Mammary epithelial cell (primary cell): ENCODE measurements at regions of chr15 and their contacts with region 1.

Region 1: DNA sequence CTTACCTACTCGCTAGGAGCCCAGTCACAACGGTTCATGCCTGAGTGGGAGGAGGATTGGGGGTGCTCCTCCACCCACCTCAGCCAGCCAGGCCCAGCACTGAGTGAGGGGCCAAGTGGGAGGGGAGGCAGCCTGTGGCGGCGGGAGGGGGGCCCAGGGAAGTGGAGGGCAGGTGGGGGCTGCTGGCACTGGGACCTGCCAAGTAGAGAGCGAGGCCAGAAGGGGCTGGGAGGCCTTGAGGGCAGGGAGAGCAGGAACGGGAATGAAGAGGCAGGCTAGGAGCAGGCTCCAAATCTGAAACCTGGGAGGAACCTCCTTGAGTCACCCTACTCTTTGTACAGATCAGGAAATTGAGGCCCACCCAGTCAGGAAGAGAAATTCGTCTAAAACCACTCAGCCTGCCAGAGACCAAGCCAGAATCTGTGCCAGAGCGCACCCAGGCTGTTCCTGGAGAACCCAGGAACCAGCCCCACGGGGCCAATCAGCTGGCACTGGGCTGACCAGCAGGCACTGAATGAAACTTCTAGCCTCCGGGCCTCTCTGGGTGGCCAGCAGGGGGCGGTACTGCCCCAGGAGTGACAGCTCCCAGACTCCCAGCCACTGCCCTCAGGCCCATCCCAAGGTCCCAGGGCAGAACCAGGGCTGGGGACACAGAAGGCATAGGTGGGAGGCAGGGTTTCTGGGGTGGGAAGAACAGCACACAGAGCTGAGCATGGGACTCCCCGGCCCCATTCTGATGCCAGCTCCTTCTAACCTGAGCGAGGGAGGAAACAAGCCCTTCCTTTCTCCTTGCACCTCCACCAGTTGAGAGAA is 14.8 kb upstream of the CYP11A1 start:
- DNase-seq: peak; percentile 86
- H3K4me3 ChIP-seq: no peak overlapping the region
- H3K27ac ChIP-seq: peak overlapping the region; percentile 95
- H3K4me1 ChIP-seq: peaks cover 68% of the 10 kb centered on the region
- H3K27me3 ChIP-seq: no peaks in the 10 kb centered on the region
- CTCF ChIP-seq: peak; percentile 83 to 98

Region 2: GRCh38 chr15:74307827-74308644 is 74.2 kb before region 1 on chr15:
- CTCF ChIA-PET with region 1: no interaction called
- dilution Hi-C with region 1: no loop called
- in situ Hi-C with region 1: no loop called
- intact Hi-C with region 1: no loop called
- DNase-seq: peak; percentile 58
- H3K4me3 ChIP-seq: no peak overlapping the region
- H3K27ac ChIP-seq: no peak overlapping the region
- H3K4me1 ChIP-seq: peaks cover 12% of the 10 kb centered on the region
- H3K27me3 ChIP-seq: no peaks in the 10 kb centered on the region
- CTCF ChIP-seq: peak; percentile 75 to 92

Region 3: DNA sequence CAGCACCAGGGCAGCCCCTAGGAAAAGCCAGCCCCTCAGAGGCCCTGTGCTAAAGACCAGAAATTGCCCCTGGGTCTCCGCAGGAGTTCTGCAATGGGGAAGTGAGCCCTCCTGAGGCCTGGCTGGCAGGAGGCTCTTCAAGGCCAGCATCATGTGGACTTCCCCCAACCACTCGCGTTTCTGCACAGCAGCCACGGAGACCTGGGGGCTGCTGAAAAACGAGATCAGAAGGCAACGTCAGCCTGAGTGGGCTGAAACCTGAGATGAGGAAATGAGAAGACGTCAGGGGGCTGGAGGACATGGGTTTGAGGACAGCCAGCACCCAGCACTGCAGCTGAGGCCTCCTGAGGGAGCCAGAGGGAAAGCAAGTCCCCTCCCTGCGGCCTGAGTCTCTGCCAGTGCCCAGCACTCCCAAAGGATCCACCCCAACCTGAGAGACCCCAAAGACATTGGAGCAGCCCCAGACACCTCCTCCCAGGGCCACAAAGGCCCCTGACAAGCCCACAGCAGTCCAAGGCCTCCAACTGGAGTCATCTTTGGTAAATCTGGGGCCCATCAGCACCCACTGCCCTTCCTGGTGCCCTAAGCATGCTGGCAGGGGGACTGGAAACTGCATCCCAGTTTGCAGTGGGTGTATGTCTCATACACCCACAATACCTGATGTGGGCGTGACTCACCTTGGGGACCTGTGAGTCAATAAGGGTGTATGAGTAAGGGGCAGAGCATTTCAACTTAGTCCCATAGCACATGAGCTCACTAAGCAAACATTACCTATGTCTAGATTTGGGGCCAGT is 14.4 kb after region 1 on chr15:
- CTCF ChIA-PET with region 1: interaction called, 3 read pairs
- dilution Hi-C with region 1: no loop called
- in situ Hi-C with region 1: no loop called
- intact Hi-C with region 1: loop called (anchors 1 kb)
- DNase-seq: peak; percentile 98
- H3K4me3 ChIP-seq: no peak overlapping the region
- H3K27ac ChIP-seq: peak overlapping the region; percentile 82
- H3K4me1 ChIP-seq: peaks cover 63% of the 10 kb centered on the region
- H3K27me3 ChIP-seq: no peaks in the 10 kb centered on the region
- CTCF ChIP-seq: no peak

Region 4: DNA sequence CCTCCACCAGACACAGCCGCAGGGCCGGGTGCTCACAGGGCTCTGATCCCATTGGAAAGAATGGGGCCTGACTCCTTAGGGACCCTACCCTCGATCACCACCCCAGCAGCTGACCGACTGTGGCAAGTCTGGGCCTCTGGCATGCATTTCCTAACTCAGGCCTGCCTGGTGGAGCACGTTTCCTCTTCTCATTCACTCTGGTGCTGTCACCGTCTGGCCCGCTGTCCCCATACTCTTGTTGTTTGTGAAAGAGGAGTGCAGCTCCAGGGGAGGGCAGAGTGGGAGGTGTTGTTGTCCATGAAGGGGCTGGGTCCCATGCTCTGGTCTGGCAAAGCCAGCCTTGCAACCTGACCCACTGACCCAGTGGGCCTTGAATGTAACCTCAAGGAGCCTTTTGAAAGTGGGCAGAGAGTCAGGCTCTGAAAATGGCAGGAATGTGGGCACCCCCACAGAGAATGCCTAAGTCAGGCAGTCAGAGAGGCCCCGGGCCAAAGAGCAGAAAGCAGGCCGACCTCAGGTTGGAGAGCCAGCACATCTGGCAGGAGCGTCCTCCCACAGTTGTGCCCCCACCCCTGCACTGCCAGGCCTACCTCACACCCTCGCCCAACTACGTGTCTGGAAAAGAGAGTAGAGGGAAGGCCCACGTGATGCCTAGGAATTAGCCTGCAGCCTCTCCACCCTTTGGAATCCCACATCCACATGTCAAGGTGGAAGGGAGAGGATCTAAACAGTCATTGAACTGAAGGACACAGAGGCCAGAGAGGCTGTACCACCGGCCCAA is 40.6 kb after region 1 on chr15:
- CTCF ChIA-PET with region 1: interaction called, 3 read pairs
- dilution Hi-C with region 1: no loop called
- in situ Hi-C with region 1: no loop called
- intact Hi-C with region 1: loop called (anchors 1 kb)
- DNase-seq: peak; percentile 83
- H3K4me3 ChIP-seq: no peak overlapping the region
- H3K27ac ChIP-seq: peak overlapping the region; percentile 87
- H3K4me1 ChIP-seq: peaks cover 72% of the 10 kb centered on the region
- H3K27me3 ChIP-seq: no peaks in the 10 kb centered on the region
- CTCF ChIP-seq: no peak

Region 5: GRCh38 chr15:74460871-74461846 is 78.9 kb after region 1 on chr15 and contains the start of gene UBL7:
- CTCF ChIA-PET with region 1: interaction called, 3 read pairs
- dilution Hi-C with region 1: loop called (anchors 5 kb)
- in situ Hi-C with region 1: no loop called
- intact Hi-C with region 1: loop called (anchors 2 kb)
- DNase-seq: peak; percentile 97
- H3K4me3 ChIP-seq: peak within 1 kb of the TSS; percentile 63 to 96 (median 94)
- H3K27ac ChIP-seq: peak within 1 kb of the TSS; percentile 82
- H3K4me1 ChIP-seq: peaks cover 13% of the 10 kb centered on the region
- H3K27me3 ChIP-seq: no peaks in the 10 kb centered on the region
- CTCF ChIP-seq: peak in 1 of 2 donors; percentile 39
- total RNA-seq, gene UBL7: 36.4 to 41.7 TPM

Region 6: DNA sequence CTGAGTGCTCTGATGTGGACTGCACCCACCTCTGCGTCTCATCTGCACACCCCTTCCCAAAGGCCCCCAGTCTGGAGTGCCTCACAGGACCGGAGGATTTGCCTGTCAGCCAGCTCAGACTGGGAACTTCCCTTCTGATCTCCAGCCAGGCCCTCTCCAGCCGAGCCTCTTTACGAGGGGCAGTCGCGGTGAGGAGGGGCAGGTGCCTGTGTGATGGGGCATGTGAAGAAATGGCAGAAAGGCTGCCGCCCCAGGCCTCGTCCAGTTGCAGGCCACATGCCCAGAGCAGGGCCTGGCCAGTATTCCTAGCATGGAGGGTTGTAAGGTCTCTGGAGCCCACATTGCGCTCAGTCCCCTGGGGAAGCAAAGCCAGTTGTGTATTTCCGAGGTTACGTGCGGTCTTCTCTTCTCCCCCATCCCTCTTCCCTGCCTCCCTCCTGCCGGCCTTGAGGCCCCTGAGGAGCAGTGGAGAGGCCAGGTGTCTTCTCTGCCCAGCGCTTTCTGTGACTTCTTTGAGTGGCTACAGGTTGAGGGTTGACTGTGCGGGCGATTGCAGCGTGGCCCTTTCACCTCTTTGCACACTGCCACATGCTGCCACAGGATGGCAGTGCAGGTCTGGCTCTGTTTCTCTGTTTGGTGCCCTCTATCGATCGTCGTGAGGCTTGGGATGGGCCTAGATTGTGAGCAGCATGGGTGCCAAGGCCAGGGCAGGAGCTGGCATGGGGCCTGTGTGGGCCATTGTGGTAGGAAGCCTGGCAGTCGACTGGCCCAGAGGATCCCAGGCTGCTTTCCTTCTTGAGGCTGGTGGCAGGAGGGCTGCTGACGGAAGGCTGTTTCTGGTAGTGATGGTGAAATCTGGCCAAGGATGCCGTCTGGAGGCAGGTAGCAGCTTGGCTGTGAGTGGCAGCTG is 238.7 kb after region 1 on chr15:
- CTCF ChIA-PET with region 1: interaction called, 3 read pairs
- dilution Hi-C with region 1: no loop called
- in situ Hi-C with region 1: loop called in 1 of 2 experiments (anchors 5 kb)
- intact Hi-C with region 1: no loop called
- DNase-seq: peak; percentile 73
- H3K4me3 ChIP-seq: no peak overlapping the region
- H3K27ac ChIP-seq: no peak overlapping the region
- H3K4me1 ChIP-seq: peaks cover 30% of the 10 kb centered on the region
- H3K27me3 ChIP-seq: no peaks in the 10 kb centered on the region
- CTCF ChIP-seq: peak; percentile 99 to 100